ENCODE measurements at regions of chr1 and their contacts with region 1.

Region 1: GRCh38 chr1:101288491-101288944 is 51.7 kb downstream of the S1PR1 start:
- DNase-seq: peak; percentile 79
- ATAC-seq: peak; percentile 25
- H3K4me3 Mint-ChIP-seq: no peak overlapping the region
- H3K27ac Mint-ChIP-seq: peak overlapping the region; percentile 43
- H3K4me1 Mint-ChIP-seq: peaks cover 83% of the 10 kb centered on the region
- H3K27me3 Mint-ChIP-seq: no peaks in the 10 kb centered on the region
- CTCF ChIP-seq: peak; percentile 88

Region 2: DNA sequence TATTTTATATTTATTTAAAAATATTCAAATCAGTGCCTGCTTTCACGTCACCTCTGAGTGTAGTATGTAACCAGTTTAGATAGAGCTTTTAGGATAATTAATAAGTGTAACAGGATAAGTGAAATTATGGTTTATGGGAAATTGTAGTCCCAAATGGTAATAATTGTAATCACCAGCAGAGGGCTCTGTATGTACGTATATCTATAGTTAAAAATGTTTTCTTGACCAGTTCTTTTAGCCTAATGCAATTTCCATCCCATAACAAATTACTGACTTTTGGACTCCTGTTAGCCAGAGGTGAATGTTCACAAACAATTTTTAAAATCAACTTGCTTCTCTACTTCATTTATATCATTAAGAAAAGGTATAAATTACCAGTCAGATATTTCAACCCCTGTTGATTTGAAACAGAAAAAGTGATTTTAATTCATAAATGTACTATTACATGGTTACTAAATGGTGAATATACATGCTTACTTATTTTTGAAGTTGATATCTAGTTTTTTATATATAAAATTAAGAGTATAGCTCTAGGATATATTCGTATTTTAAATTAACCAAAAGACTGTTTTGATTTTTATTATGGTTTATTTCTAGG is 367.3 kb before region 1 on chr1:
- CTCF ChIA-PET with region 1: interaction called, 28 read pairs
- POLR2A ChIA-PET with region 1: no interaction called
- intact Hi-C with region 1: loop called (anchors 2 kb)
- DNase-seq: no peak
- ATAC-seq: no peak
- H3K4me3 Mint-ChIP-seq: no peak overlapping the region
- H3K27ac Mint-ChIP-seq: peak overlapping the region; percentile 64
- H3K4me1 Mint-ChIP-seq: peaks cover 53% of the 10 kb centered on the region
- H3K27me3 Mint-ChIP-seq: no peaks in the 10 kb centered on the region
- CTCF ChIP-seq: peak; percentile 93

Region 3: GRCh38 chr1:101004670-101005069 is 283.8 kb before region 1 on chr1:
- CTCF ChIA-PET with region 1: interaction called, 5 read pairs
- POLR2A ChIA-PET with region 1: no interaction called
- intact Hi-C with region 1: loop called (anchors 5 kb)
- DNase-seq: no peak
- ATAC-seq: no peak
- H3K4me3 Mint-ChIP-seq: no peak overlapping the region
- H3K27ac Mint-ChIP-seq: no peak overlapping the region
- H3K4me1 Mint-ChIP-seq: peaks cover 57% of the 10 kb centered on the region
- H3K27me3 Mint-ChIP-seq: no peaks in the 10 kb centered on the region
- CTCF ChIP-seq: no peak

Region 4: GRCh38 chr1:101136739-101137138 is 151.8 kb before region 1 on chr1:
- CTCF ChIA-PET with region 1: interaction called, 108 read pairs
- POLR2A ChIA-PET with region 1: interaction called, 4 read pairs
- intact Hi-C with region 1: loop called (anchors 1 kb)
- DNase-seq: peak; percentile 59
- ATAC-seq: peak; percentile 85
- H3K4me3 Mint-ChIP-seq: peak overlapping the region; percentile 33
- H3K27ac Mint-ChIP-seq: peak overlapping the region; percentile 80
- H3K4me1 Mint-ChIP-seq: peaks cover 64% of the 10 kb centered on the region
- H3K27me3 Mint-ChIP-seq: no peaks in the 10 kb centered on the region
- CTCF ChIP-seq: peak; percentile 56

Region 5: DNA sequence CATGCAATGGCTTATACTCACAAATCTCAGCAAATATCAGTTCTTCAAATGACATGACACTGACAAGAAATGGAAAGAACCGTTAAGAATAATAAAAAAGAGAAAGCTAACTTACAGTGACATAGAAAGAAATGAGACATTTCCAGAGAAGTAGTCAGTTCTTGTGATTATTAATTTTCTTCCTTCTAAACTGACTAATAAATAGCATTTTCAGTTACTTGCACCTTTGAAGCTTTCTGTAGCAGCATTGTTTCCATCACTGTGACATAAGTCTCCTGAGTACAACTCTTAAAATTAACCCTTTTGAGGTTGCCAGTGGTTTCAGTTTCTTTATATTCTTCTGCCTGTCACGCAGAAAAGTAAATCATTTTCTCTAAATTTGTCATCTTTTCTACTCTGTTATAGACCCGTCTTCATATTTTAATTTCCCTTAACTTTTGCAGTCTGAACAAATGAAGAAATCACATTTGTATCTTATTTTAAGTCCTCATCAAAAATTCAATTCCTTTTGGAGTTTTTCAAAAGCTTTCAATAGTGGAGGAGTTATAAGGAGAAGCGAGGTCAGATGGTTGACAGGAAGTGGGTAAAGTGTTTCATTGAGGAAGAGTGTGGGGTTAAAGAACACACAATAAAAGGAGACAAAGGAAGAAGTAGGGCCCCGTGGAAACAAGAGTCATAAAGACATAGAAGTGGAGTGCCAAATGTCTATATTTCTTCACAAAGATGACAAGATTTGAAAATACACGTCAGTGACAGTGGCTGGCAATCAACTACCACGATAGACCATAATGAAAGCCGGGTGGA is 109.6 kb before region 1 on chr1:
- CTCF ChIA-PET with region 1: interaction called, 29 read pairs
- POLR2A ChIA-PET with region 1: interaction called, 7 read pairs
- intact Hi-C with region 1: loop called (anchors 2 kb)
- DNase-seq: peak; percentile 63
- ATAC-seq: peak; percentile 75
- H3K4me3 Mint-ChIP-seq: peak overlapping the region; percentile 75
- H3K27ac Mint-ChIP-seq: peak overlapping the region; percentile 100
- H3K4me1 Mint-ChIP-seq: peaks cover 77% of the 10 kb centered on the region
- H3K27me3 Mint-ChIP-seq: no peaks in the 10 kb centered on the region
- CTCF ChIP-seq: no peak

Region 6: GRCh38 chr1:101262630-101263348 is 25.7 kb before region 1 on chr1:
- CTCF ChIA-PET with region 1: interaction called, 11 read pairs
- POLR2A ChIA-PET with region 1: interaction called, 7 read pairs
- intact Hi-C with region 1: no loop called
- DNase-seq: peak; percentile 30
- ATAC-seq: peak; percentile 31
- H3K4me3 Mint-ChIP-seq: peak overlapping the region; percentile 54
- H3K27ac Mint-ChIP-seq: peak overlapping the region; percentile 82
- H3K4me1 Mint-ChIP-seq: peaks cover 74% of the 10 kb centered on the region
- H3K27me3 Mint-ChIP-seq: no peaks in the 10 kb centered on the region
- CTCF ChIP-seq: no peak

Region 7: GRCh38 chr1:101496109-101496508 is 207.6 kb after region 1 on chr1:
- CTCF ChIA-PET with region 1: no interaction called
- POLR2A ChIA-PET with region 1: no interaction called
- intact Hi-C with region 1: no loop called
- DNase-seq: peak; percentile 16
- ATAC-seq: peak; percentile 89
- H3K4me3 Mint-ChIP-seq: no peak overlapping the region
- H3K27ac Mint-ChIP-seq: no peak overlapping the region
- H3K4me1 Mint-ChIP-seq: no peaks in the 10 kb centered on the region
- H3K27me3 Mint-ChIP-seq: no peaks in the 10 kb centered on the region
- CTCF ChIP-seq: no peak

Measured in activated CD8-positive, alpha-beta T cell treated with anti-CD3 and anti-CD28 coated beads for 36 hours (primary cell).